Activated B cell treated with CpG ODN at 0.5 μM for 24 hours (primary cell): ENCODE measurements at regions of chr11 and their contacts with region 1.

Region 1: GRCh38 chr11:35313066-35313759 is 106.1 kb downstream of the SLC1A2 start:
- DNase-seq: no peak
- ATAC-seq: peak; percentile 91
- H3K4me3 Mint-ChIP-seq: peak overlapping the region; percentile 38
- H3K27ac Mint-ChIP-seq: peak overlapping the region; percentile 72
- H3K4me1 Mint-ChIP-seq: peaks cover 64% of the 10 kb centered on the region
- H3K27me3 Mint-ChIP-seq: no peaks in the 10 kb centered on the region
- CTCF ChIP-seq: no peak

Region 2: DNA sequence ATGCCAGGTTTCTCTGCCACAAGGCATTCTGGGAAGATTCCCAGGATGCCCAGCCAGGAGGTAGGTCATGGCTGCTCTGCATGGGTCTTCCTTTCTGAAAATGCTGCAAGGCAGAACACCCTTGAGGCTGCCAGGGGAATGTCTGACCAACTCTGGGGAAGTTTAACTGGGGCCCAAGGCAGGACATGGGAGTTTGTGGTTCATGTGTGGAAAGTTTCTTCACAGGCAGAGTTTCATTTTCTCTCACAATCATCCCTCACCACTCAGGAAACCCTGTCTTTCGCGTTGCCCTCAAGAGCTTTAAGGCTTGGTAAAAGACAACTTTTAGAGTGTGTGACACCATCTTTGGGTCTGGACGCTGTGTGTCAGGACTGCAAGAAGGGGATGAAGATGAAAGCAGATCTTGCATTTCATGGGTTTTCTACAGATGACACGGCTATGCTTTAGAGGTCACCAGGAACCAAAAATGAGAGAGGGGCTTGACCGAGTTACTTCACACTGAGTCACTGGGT is 40.8 kb before region 1 on chr11:
- CTCF ChIA-PET with region 1: no interaction called
- POLR2A ChIA-PET with region 1: interaction called, 4 read pairs
- intact Hi-C with region 1: loop called (anchors 2 kb)
- DNase-seq: no peak
- ATAC-seq: peak; percentile 75
- H3K4me3 Mint-ChIP-seq: peak overlapping the region; percentile 60
- H3K27ac Mint-ChIP-seq: peak overlapping the region; percentile 63
- H3K4me1 Mint-ChIP-seq: peaks cover 35% of the 10 kb centered on the region
- H3K27me3 Mint-ChIP-seq: no peaks in the 10 kb centered on the region
- CTCF ChIP-seq: no peak

Region 3: GRCh38 chr11:35292279-35292678 is 20.9 kb before region 1 on chr11:
- CTCF ChIA-PET with region 1: no interaction called
- POLR2A ChIA-PET with region 1: no interaction called
- intact Hi-C with region 1: no loop called
- DNase-seq: no peak
- ATAC-seq: no peak
- H3K4me3 Mint-ChIP-seq: no peak overlapping the region
- H3K27ac Mint-ChIP-seq: no peak overlapping the region
- H3K4me1 Mint-ChIP-seq: peaks cover 17% of the 10 kb centered on the region
- H3K27me3 Mint-ChIP-seq: no peaks in the 10 kb centered on the region
- CTCF ChIP-seq: no peak

Region 4: DNA sequence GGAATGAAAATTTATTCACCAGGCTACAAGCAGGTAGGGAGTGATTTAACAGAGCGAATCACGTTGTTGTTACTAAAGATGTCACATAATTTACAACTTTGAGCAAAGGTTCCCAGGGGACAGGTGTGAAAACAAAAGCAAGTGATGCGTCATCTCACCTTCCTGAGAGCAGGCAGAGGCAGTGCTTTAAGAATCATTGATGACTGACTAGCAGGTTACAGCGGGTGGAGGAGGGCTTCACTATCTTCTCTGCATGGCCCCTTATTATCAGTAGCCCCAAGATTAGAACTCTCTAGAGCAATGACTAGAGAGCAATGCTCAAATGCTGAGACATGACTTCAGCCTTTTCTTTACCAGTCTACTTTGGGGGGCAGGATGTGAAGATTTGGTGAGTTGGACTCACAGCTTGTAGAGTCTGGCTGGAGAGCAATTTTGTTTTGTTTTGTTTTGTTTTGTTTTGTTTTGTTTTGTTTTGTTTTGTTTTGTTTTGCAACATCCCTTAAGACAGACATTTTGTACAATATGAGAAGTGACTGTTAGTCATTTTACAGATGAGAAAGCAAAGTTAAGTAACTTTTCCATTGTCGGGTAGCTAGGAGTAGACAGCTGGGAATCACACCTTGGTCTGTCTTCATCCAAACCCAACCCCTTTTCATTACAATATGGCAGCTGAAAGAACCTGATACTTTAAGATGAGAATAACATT is 21.3 kb after region 1 on chr11:
- CTCF ChIA-PET with region 1: no interaction called
- POLR2A ChIA-PET with region 1: interaction called, 3 read pairs
- intact Hi-C with region 1: loop called (anchors 1 kb)
- DNase-seq: no peak
- ATAC-seq: peak; percentile 82
- H3K4me3 Mint-ChIP-seq: peak overlapping the region; percentile 22
- H3K27ac Mint-ChIP-seq: peak overlapping the region; percentile 67
- H3K4me1 Mint-ChIP-seq: peaks cover 60% of the 10 kb centered on the region
- H3K27me3 Mint-ChIP-seq: no peaks in the 10 kb centered on the region
- CTCF ChIP-seq: no peak

Region 5: GRCh38 chr11:35436581-35437250 is 123.5 kb after region 1 on chr11:
- CTCF ChIA-PET with region 1: no interaction called
- POLR2A ChIA-PET with region 1: no interaction called
- intact Hi-C with region 1: no loop called
- DNase-seq: no peak
- ATAC-seq: no peak
- H3K4me3 Mint-ChIP-seq: no peak overlapping the region
- H3K27ac Mint-ChIP-seq: no peak overlapping the region
- H3K4me1 Mint-ChIP-seq: no peaks in the 10 kb centered on the region
- H3K27me3 Mint-ChIP-seq: peaks cover 21% of the 10 kb centered on the region
- CTCF ChIP-seq: no peak